ENCODE measurements at regions of chr9 and their contacts with region 1.

Region 1: DNA sequence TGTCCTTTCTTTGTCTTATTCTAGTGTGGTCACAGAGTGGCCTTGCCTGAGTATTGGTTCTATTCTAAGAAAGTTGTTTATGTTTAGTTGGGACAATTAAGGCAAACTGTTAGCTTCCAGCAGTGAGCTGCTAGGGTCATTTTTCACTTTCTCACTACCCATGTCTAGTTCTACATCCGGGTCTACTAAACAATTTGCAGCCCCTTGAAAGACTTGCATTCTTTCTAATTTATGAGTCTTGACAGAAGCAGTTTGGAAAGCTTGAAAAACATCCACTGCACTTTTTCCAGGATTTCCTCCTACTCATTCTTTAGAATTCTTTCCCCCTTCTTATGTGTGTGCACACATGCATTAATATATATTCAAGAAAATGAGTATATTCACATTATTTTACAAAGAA is 892.2 kb upstream of the ACO1 start:
- DNase-seq: no peak
- ATAC-seq: no peak
- H3K4me3 Mint-ChIP-seq: no peak overlapping the region
- H3K27ac Mint-ChIP-seq: no peak overlapping the region
- H3K4me1 Mint-ChIP-seq: no peaks in the 10 kb centered on the region
- H3K27me3 Mint-ChIP-seq: no peaks in the 10 kb centered on the region

Region 2: DNA sequence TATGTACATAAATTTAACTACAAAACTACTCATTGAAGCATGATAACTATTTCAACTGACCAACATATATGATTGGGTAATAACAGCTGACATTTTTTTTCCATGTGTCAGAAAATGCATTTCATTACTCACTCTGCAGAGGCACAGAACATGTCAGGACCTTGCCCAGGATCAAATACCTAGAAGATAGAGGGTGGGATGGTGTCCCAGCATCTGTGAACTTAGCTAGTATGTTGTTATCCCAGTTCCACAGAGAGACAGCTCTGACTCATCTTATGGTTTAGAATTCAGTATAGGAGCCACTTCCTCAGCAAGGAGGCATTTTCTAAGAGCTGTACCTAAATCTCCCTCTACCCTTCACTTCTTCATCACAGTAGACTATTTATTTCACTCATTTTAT is 306.4 kb before region 1 on chr9:
- CTCF ChIA-PET with region 1: no interaction called
- POLR2A ChIA-PET with region 1: no interaction called
- intact Hi-C with region 1: no loop called
- DNase-seq: no peak
- ATAC-seq: no peak
- H3K4me3 Mint-ChIP-seq: no peak overlapping the region
- H3K27ac Mint-ChIP-seq: no peak overlapping the region
- H3K4me1 Mint-ChIP-seq: no peaks in the 10 kb centered on the region
- H3K27me3 Mint-ChIP-seq: no peaks in the 10 kb centered on the region

Region 3: GRCh38 chr9:31259824-31260223 is 232.4 kb before region 1 on chr9:
- CTCF ChIA-PET with region 1: no interaction called
- POLR2A ChIA-PET with region 1: no interaction called
- intact Hi-C with region 1: no loop called
- DNase-seq: no peak
- ATAC-seq: no peak
- H3K4me3 Mint-ChIP-seq: no peak overlapping the region
- H3K27ac Mint-ChIP-seq: peak overlapping the region; percentile 4
- H3K4me1 Mint-ChIP-seq: peaks cover 20% of the 10 kb centered on the region
- H3K27me3 Mint-ChIP-seq: no peaks in the 10 kb centered on the region

Region 4: GRCh38 chr9:31418419-31418818 is 73.8 kb before region 1 on chr9:
- CTCF ChIA-PET with region 1: no interaction called
- POLR2A ChIA-PET with region 1: no interaction called
- intact Hi-C with region 1: no loop called
- DNase-seq: no peak
- ATAC-seq: no peak
- H3K4me3 Mint-ChIP-seq: no peak overlapping the region
- H3K27ac Mint-ChIP-seq: no peak overlapping the region
- H3K4me1 Mint-ChIP-seq: no peaks in the 10 kb centered on the region
- H3K27me3 Mint-ChIP-seq: no peaks in the 10 kb centered on the region

Region 5: GRCh38 chr9:31535651-31536050 is 43.4 kb after region 1 on chr9:
- CTCF ChIA-PET with region 1: no interaction called
- POLR2A ChIA-PET with region 1: no interaction called
- intact Hi-C with region 1: no loop called
- DNase-seq: no peak
- ATAC-seq: no peak
- H3K4me3 Mint-ChIP-seq: no peak overlapping the region
- H3K27ac Mint-ChIP-seq: no peak overlapping the region
- H3K4me1 Mint-ChIP-seq: no peaks in the 10 kb centered on the region
- H3K27me3 Mint-ChIP-seq: no peaks in the 10 kb centered on the region

Region 6: GRCh38 chr9:31556667-31557463 is 64.6 kb after region 1 on chr9:
- CTCF ChIA-PET with region 1: no interaction called
- POLR2A ChIA-PET with region 1: no interaction called
- intact Hi-C with region 1: loop called in 1 of 2 experiments (anchors 10 kb)
- DNase-seq: no peak
- ATAC-seq: no peak
- H3K4me3 Mint-ChIP-seq: no peak overlapping the region
- H3K27ac Mint-ChIP-seq: no peak overlapping the region
- H3K4me1 Mint-ChIP-seq: no peaks in the 10 kb centered on the region
- H3K27me3 Mint-ChIP-seq: no peaks in the 10 kb centered on the region

Measured in activated CD4-positive, alpha-beta T cell treated with anti-CD3 and anti-CD28 coated beads for 36 hours (primary cell).